Testis (tissue), 5 donors: ENCODE measurements at regions of chr18 and their contacts with region 1.

Region 1: GRCh38 chr18:24726727-24727492 is 266.5 kb downstream of the HRH4 start:
- DNase-seq: peak; percentile 75
- H3K4me3 ChIP-seq: no peak overlapping the region
- H3K27ac ChIP-seq: no peak overlapping the region
- H3K4me1 ChIP-seq: peaks cover 7% of the 10 kb centered on the region
- H3K27me3 ChIP-seq: no peaks in the 10 kb centered on the region
- CTCF ChIP-seq: peak; percentile 81 to 87 (median 81)
- POLR2A ChIP-seq: no peak

Region 2: GRCh38 chr18:24488824-24489493 is 238.0 kb before region 1 on chr18:
- intact Hi-C with region 1: loop called (anchors 5 kb)
- DNase-seq: no peak
- H3K4me3 ChIP-seq: no peak overlapping the region
- H3K27ac ChIP-seq: no peak overlapping the region
- H3K4me1 ChIP-seq: no peaks in the 10 kb centered on the region
- H3K27me3 ChIP-seq: no peaks in the 10 kb centered on the region
- CTCF ChIP-seq: peak; percentile 62 to 89 (median 66)
- POLR2A ChIP-seq: no peak

Region 3: GRCh38 chr18:24595561-24596031 is 131.3 kb before region 1 on chr18:
- intact Hi-C with region 1: loop called (anchors 10 kb)
- DNase-seq: peak; percentile 78
- H3K4me3 ChIP-seq: no peak overlapping the region
- H3K27ac ChIP-seq: peak overlapping the region in 1 of 2 donors; percentile 7
- H3K4me1 ChIP-seq: no peaks in the 10 kb centered on the region
- H3K27me3 ChIP-seq: no peaks in the 10 kb centered on the region
- CTCF ChIP-seq: no peak
- POLR2A ChIP-seq: no peak

Region 4: GRCh38 chr18:24868760-24869237 is 141.9 kb after region 1 on chr18:
- intact Hi-C with region 1: no loop called
- DNase-seq: no peak
- H3K4me3 ChIP-seq: no peak overlapping the region
- H3K27ac ChIP-seq: no peak overlapping the region
- H3K4me1 ChIP-seq: no peaks in the 10 kb centered on the region
- H3K27me3 ChIP-seq: no peaks in the 10 kb centered on the region
- CTCF ChIP-seq: no peak
- POLR2A ChIP-seq: no peak